ENCODE measurements at regions of chr11 and their contacts with region 1.

Region 1: GRCh38 chr11:73141848-73142286 is 251 bp downstream of the FCHSD2 start:
- DNase-seq: peak in 4 of 10 donors; percentile 37 to 75 (median 57)
- ATAC-seq: peak; percentile 31 to 48
- H3K4me3 Mint-ChIP-seq: peak overlapping the region; percentile 92 to 99 (median 96)
- H3K27ac Mint-ChIP-seq: peak overlapping the region; percentile 87 to 100 (median 95)
- H3K4me1 Mint-ChIP-seq: peaks cover 24 to 76% (median 41%) of the 10 kb centered on the region in 4 donors
- H3K27me3 Mint-ChIP-seq: peaks cover 0 to 3% (median 0%) of the 10 kb centered on the region in 5 donors

Region 2: DNA sequence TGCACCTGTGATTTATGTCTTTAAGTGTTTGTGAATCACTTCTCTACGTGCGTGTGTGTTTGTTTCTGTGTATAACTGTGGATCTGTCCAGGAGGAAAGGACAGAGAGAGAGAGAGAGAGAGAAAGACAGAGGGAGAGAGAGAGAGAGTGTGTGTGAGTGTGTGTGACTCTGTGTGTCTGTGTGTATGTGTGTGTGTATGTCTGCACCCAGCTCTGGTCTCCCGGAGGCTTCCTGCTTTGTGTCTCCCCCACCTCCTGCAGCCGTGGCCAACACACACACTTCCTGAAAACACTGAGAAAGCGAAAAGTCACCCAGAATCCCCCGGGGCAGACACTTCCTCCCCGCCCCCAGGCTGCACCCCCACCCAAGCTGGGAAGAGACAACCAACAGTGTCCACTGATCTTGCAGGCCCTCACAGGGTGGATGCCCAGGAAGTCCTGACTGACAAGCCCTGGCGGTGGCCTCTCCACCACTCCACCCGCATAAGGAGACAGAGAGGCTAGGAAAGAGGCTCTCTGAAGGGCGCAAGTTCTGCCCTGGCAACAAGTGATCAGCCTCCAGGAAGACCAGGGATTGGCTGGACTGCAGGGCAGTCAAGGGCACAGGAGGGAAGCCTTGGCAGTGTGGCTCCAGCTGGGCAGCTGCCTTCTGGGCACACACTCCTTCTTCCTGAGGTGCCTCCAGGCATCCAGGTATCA is 419.7 kb before region 1 on chr11:
- POLR2A ChIA-PET with region 1: interaction called, 16 read pairs
- DNase-seq: peak; percentile 70 to 96 (median 84)
- ATAC-seq: peak; percentile 85 to 87
- H3K4me3 Mint-ChIP-seq: peak overlapping the region; percentile 87 to 99 (median 96)
- H3K27ac Mint-ChIP-seq: peak overlapping the region; percentile 92 to 99 (median 97)
- H3K4me1 Mint-ChIP-seq: peaks cover 38 to 83% (median 65%) of the 10 kb centered on the region in 4 donors
- H3K27me3 Mint-ChIP-seq: peaks cover 0 to 1% (median 0%) of the 10 kb centered on the region in 5 donors

Region 3: GRCh38 chr11:72814286-72815109 is 327.4 kb before region 1 on chr11 and contains the start of gene ATG16L2:
- POLR2A ChIA-PET with region 1: interaction called, 13 read pairs
- DNase-seq: peak; percentile 78 to 93 (median 89)
- ATAC-seq: peak; percentile 83 to 85
- H3K4me3 Mint-ChIP-seq: peak within 1 kb of the TSS; percentile 95 to 99 (median 98)
- H3K27ac Mint-ChIP-seq: peak within 1 kb of the TSS; percentile 93 to 99 (median 98)
- H3K4me1 Mint-ChIP-seq: peaks cover 33 to 64% (median 54%) of the 10 kb centered on the region in 4 donors
- H3K27me3 Mint-ChIP-seq: no peaks in the 10 kb centered on the region
- polyA plus RNA-seq, gene ATG16L2: 9.9 to 12.1 (median 11.6) TPM

Region 4: DNA sequence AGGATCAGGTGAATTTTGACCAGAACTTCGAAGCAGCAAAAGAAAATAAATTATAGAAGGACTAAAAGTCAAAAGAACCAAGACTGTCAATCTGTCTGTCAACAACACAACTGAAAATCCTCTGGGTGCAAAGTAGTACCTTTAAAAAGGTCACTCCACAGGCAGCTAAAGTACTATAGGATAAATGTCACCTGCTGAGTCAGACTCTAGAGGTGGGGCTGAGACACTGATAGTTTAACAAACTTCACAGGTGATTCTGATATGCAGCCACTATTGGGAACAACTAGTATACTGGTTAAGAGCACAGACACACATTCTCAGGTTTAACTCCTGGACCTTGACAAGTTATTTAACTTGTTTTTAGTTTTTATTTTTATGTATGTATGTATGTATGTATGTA is 107.1 kb before region 1 on chr11:
- POLR2A ChIA-PET with region 1: interaction called, 24 read pairs
- DNase-seq: no peak
- ATAC-seq: peak; percentile 44 to 52
- H3K4me3 Mint-ChIP-seq: peak overlapping the region; percentile 50 to 81 (median 72)
- H3K27ac Mint-ChIP-seq: peak overlapping the region; percentile 2 to 92 (median 78)
- H3K4me1 Mint-ChIP-seq: peaks cover 21 to 60% (median 45%) of the 10 kb centered on the region in 4 donors
- H3K27me3 Mint-ChIP-seq: no peaks in the 10 kb centered on the region

Region 5: DNA sequence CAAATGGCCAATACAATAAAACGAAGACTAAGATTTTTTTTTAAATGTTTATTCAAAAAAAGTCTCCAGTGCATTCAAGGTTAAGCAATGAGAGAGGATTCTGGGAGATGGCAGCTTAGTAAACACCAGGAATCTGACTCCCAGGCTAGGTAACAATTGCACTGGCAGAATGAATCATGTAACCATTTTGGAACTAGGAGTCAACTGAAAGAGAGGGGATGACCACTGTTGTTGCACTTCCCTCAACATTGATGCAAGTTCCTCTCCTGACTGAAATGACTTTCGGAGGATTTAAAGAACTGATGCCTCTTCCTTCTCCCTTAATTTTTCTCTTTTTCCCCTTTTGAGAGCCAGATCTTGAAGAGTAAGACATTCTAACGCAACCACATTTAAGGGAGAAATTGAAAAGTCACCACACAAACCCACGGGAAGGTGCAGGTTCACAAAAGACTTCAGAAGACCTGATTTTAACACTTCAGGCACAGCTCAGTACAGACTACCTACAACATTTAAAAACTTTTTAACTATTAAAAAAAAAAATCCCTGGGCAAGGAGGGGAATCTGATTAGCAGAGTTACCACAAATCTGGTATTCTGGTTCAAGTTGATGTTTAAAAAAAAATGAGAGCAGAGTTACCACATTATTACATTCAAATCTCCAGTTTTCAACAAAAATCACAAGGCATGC is 56.5 kb before region 1 on chr11:
- POLR2A ChIA-PET with region 1: no interaction called
- DNase-seq: no peak
- ATAC-seq: no peak
- H3K4me3 Mint-ChIP-seq: peak overlapping the region in 1 of 10 donors; percentile 59
- H3K27ac Mint-ChIP-seq: peak overlapping the region in 6 of 10 donors; percentile 7 to 82 (median 46)
- H3K4me1 Mint-ChIP-seq: peaks cover 15 to 43% (median 22%) of the 10 kb centered on the region in 4 donors
- H3K27me3 Mint-ChIP-seq: no peaks in the 10 kb centered on the region

Region 6: GRCh38 chr11:73157053-73158010 is 15.5 kb after region 1 on chr11:
- POLR2A ChIA-PET with region 1: interaction called, 47 read pairs
- DNase-seq: no peak
- ATAC-seq: no peak
- H3K4me3 Mint-ChIP-seq: peak overlapping the region in 1 of 10 donors; percentile 50
- H3K27ac Mint-ChIP-seq: peak overlapping the region in 8 of 10 donors; percentile 27 to 99 (median 65)
- H3K4me1 Mint-ChIP-seq: peaks cover 31 to 77% (median 52%) of the 10 kb centered on the region in 4 donors
- H3K27me3 Mint-ChIP-seq: no peaks in the 10 kb centered on the region

Region 7: DNA sequence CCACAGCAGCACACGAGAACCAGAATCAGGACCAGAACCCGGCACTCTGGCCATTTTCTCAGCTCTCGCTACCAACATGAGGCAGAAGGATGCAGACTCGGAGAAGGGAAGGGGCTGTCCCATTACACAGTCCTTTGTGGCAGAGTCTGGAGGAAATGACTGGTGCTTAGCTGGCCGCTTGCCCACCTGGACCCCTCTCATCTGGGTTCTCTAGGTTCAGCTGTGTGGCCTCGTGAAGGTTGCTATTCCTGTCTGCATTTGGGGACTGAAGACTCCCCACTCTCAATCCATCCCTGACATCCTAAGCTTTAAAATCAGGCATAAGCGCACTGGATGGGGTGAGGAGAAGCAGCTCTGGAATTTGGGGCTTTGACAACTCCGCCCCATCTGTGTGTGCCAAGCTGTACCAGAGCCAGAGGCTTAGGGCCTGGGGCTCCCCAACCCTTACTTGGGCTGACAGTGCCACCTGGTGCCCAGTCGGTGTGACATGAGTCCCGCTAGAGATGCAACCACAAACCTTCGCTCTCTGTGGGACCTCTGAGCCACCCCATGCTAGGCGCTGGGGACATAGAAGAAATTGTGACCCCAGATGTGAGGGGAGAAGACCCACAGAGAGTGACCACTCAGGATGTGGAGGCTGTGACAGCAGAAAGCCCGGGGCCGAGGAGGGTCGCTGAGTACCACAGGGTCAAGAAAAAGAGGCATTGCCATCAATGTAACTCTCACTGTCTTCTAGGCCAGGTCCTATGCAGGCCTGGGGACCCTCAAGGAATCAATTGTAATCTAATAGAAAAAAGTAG is 36.1 kb after region 1 on chr11:
- POLR2A ChIA-PET with region 1: interaction called, 20 read pairs
- DNase-seq: peak; percentile 59 to 88 (median 76)
- ATAC-seq: peak; percentile 99 to 100
- H3K4me3 Mint-ChIP-seq: no peak overlapping the region
- H3K27ac Mint-ChIP-seq: no peak overlapping the region
- H3K4me1 Mint-ChIP-seq: peaks cover 5 to 27% (median 8%) of the 10 kb centered on the region in 4 donors
- H3K27me3 Mint-ChIP-seq: peaks cover 0 to 4% (median 0%) of the 10 kb centered on the region in 5 donors